Posterior vena cava (tissue), 2 donors: ENCODE measurements at regions of chr6 and their contacts with region 1.

Region 1: DNA sequence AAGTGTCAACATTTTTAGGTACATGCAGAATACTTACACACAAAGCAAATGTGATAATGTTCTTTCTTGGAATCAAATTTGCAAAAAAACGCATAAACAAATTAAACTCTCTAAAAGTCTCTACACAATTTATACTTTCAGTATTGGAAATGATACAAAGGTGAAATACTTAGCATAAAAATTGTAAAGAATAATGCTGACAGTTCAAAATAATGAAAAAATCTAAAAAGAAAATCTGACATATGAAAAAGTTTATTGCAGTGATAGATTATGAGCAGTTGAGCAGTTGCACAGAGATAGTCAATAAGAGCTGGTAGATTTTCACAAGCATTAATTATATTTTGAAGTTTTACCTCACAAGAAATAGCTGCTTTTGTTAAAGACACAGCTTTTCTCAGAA is 1176.4 kb upstream of the EYS start:
- DNase-seq: no peak

Region 2: DNA sequence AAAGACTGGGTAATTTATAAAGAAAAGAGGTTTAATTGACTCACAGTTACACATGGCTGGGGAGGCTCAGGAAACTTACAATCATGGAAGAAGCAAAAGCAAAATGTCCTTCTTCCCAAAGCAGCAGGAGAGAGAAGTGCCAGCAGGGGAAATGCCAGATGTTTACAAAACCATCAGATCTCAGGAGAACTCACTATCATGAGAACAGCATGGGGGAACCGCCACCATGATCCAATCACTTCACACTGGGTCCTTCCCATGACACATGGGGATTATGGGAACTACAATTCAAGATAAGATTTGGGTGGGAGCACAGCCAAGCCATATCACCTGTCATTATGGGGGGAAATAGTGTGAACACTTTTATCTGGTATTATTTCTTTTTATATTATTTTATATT is 1733.6 kb before region 1 on chr6:
- intact Hi-C with region 1: loop called in 1 of 2 experiments (anchors 5 kb)
- DNase-seq: no peak

Region 3: GRCh38 chr6:68158256-68158655 is 1274.8 kb after region 1 on chr6:
- intact Hi-C with region 1: loop called in 1 of 2 experiments (anchors 5 kb)
- DNase-seq: no peak